Activated CD4-positive, alpha-beta memory T cell treated with anti-CD3 and anti-CD28 coated beads for 36 hours (primary cell): ENCODE measurements at regions of chr14 and their contacts with region 1.

Region 1: DNA sequence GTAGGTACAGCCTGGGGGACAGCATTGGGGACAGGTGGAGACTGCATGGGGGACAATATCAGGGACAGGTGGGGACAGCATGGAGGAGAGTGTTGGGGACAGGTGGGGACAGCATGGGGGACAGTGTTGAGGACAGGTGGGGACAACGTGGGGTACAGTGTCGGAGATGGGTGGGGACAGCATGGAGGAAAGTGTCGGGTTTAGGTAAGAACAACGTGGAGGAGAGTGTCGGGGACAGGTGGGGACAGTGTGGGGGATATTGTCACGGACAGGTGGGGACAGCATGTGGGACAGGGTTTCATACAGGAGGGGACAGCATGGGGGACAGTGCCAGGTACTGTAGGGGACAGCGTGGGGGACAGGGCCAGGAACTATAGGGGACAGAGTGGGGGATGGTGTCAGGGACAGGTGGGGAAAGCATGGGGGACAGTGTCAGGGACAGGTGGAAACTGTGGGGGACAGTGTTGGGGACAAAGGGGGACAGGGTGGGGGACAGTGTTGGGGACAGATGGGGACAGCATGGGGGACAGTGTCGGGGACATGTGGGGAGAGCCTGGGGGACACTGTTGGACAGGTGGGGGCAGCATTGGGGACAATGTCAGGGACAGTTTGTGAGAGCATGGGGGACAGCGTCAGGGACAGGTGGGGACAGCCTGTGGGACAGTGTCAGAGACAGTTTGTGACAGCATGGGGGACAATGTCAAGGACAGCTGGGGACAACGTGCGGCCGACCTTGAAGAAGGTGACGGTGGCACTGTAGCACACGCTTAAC is 213.1 kb downstream of the TMEM121 start:
- DNase-seq: no peak
- H3K4me3 Mint-ChIP-seq: no peak overlapping the region
- H3K27ac Mint-ChIP-seq: no peak overlapping the region
- H3K4me1 Mint-ChIP-seq: no peaks in the 10 kb centered on the region
- H3K27me3 Mint-ChIP-seq: no peaks in the 10 kb centered on the region

Region 2: GRCh38 chr14:105666420-105666819 is 73.1 kb before region 1 on chr14:
- CTCF ChIA-PET with region 1: no interaction called
- POLR2A ChIA-PET with region 1: no interaction called
- intact Hi-C with region 1: loop called (anchors 5 kb)
- DNase-seq: no peak
- H3K4me3 Mint-ChIP-seq: no peak overlapping the region
- H3K27ac Mint-ChIP-seq: no peak overlapping the region
- H3K4me1 Mint-ChIP-seq: no peaks in the 10 kb centered on the region
- H3K27me3 Mint-ChIP-seq: no peaks in the 10 kb centered on the region

Region 3: GRCh38 chr14:105709281-105710118 is 30.0 kb before region 1 on chr14:
- CTCF ChIA-PET with region 1: no interaction called
- POLR2A ChIA-PET with region 1: no interaction called
- intact Hi-C with region 1: no loop called
- DNase-seq: no peak
- H3K4me3 Mint-ChIP-seq: no peak overlapping the region
- H3K27ac Mint-ChIP-seq: no peak overlapping the region
- H3K4me1 Mint-ChIP-seq: no peaks in the 10 kb centered on the region
- H3K27me3 Mint-ChIP-seq: peaks cover 1% of the 10 kb centered on the region

Region 4: DNA sequence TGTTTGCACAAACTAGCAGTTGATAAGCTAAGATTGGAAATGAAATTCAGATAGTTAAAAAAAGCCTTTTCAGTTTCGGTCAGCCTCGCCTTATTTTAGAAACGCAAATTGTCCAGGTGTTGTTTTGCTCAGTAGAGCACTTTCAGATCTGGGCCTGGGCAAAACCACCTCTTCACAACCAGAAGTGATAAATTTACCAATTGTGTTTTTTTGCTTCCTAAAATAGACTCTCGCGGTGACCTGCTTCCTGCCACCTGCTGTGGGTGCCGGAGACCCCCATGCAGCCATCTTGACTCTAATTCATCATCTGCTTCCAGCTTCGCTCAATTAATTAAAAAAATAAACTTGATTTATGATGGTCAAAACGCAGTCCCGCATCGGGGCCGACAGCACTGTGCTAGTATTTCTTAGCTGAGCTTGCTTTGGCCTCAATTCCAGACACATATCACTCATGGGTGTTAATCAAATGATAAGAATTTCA is 122.5 kb after region 1 on chr14:
- CTCF ChIA-PET with region 1: no interaction called
- POLR2A ChIA-PET with region 1: no interaction called
- intact Hi-C with region 1: no loop called
- DNase-seq: peak; percentile 61
- H3K4me3 Mint-ChIP-seq: peak overlapping the region; percentile 66
- H3K27ac Mint-ChIP-seq: peak overlapping the region; percentile 86
- H3K4me1 Mint-ChIP-seq: peaks cover 41% of the 10 kb centered on the region
- H3K27me3 Mint-ChIP-seq: peaks cover 11% of the 10 kb centered on the region